Aorta (tissue), 5 donors: ENCODE measurements at regions of chr7 and their contacts with region 1.

Region 1: DNA sequence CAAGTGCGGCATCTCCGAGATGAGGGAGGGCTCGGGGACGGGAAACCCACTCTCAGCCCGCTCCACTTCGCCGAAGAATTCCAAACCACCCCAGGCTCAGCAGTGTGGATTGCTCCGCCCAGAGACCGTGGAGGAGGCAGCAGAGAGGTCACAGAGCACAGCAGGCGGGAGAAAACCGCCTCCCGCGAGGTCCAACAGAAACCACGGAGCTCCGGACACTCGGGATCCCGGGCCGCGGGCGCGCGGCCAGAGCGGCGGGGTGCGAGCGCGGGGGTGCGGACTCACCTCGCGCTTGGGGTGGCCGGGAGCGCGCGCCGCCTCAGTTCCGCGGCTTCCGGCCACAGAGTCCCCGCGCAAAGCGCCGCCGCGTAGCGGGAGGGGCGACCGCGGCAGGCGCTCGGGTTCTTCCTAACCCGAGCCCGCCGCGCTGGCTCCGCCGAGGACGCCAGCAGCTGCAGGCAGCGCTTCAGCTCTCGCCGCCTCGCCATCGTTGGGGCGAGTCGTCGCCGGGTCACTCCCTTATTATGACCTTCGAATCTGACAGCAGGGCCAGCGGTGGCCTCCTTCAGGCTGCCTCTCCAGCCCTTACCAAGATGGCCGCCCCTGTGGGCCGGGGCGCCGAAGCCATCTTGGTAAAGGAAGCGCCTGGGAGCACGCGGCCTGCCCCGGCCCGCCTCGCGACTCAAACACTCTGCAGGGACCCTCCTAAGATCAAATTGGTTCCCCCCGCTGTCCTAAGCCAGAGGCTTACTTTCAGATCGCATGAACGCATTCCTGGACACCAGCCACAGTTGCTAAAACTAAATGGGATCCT is at the start of gene NAPEPLD:
- DNase-seq: peak; percentile 93 to 95
- ATAC-seq: peak; percentile 96
- H3K4me3 ChIP-seq: peak within 1 kb of the TSS; percentile 78 to 97
- H3K27ac ChIP-seq: peak within 1 kb of the TSS; percentile 91 to 92
- H3K4me1 ChIP-seq: no peaks in the 10 kb centered on the region
- H3K27me3 ChIP-seq: no peaks in the 10 kb centered on the region
- total RNA-seq, gene NAPEPLD: 10.0 to 20.5 TPM

Region 2: DNA sequence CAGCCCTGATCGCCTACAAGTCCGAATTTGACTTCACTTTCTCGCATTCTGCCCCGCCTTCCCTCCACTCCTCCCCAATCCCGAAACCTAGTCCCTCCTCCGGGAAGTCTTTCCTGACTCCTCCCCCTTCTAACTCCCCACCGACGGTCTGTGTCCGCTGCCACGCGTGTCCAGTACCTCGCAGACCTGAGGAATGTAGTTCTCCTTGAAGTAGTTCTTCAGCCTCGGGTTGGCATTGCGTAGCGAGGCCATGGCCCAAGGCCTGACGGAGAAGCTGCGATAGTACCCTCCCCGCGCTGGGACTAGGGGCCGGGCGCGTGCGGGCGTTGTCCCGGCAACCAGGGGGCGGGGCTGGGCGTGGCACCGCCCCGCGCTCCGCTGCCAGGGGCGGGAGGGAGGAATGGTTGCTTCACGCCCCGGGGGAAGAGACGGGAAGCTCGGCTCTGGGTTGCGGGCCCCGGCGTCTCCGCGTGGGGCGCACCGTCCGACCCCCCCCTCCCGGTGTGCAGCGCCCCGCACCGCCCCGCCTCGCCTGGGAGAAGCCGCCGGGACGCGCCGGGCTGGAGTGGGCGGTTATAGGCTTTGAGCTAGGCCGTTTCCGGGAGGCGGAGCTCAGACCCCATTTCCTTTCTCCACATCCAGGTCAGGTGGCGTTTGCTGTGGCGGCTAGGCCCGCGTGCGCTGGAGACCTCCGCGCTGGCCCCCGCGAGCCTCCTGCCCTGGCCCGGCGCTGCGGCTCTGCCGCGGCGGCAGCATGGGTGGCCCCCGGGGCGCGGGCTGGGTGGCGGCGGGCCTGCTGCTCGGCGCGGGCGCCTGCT is 74.5 kb before region 1 on chr7 and contains the starts of genes ARMC10 and FBXL13:
- intact Hi-C with region 1: loop called (anchors 2 to 5 kb)
- DNase-seq: peak; percentile 93 to 95
- ATAC-seq: peak; percentile 97
- H3K4me3 ChIP-seq: peak within 1 kb of the TSS; percentile 57 to 60
- H3K27ac ChIP-seq: peak within 1 kb of the TSS; percentile 61 to 78
- H3K4me1 ChIP-seq: no peaks in the 10 kb centered on the region
- H3K27me3 ChIP-seq: no peaks in the 10 kb centered on the region
- total RNA-seq, gene ARMC10: 29.8 to 40.0 TPM
- total RNA-seq, gene FBXL13: 1.4 to 2.6 TPM

Region 3: DNA sequence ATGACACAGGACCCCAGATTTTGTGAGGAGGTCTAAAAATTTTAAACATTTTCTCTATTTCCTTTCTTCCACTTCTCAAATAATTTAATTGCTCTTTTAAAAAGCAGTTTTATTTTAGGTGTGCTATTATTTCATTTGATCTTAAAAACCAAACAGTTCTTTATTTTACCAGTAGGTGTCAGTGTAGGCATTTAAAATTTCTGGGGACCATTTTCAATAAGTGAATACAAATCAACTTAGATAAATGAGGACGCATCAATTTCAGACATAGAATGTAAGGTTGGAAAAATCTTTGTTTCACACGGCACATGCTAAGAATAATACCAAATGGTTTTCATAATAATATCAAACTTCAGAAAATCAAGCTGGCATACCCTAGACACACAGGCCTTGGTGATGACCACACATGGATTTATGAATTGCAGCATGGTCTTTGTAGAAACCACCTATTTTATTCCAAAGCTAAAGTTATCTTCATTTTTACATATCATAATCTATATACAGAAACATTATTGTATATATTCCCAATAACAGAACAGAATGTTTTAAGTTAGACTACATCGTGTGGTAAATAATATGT is 424.4 kb after region 1 on chr7:
- intact Hi-C with region 1: no loop called
- DNase-seq: no peak
- ATAC-seq: no peak
- H3K4me3 ChIP-seq: no peak overlapping the region
- H3K27ac ChIP-seq: no peak overlapping the region
- H3K4me1 ChIP-seq: no peaks in the 10 kb centered on the region
- H3K27me3 ChIP-seq: no peaks in the 10 kb centered on the region